ENCODE measurements at regions of chr6 and their contacts with region 1.

Region 1: GRCh38 chr6:149194820-149195558 is 122.5 kb upstream of the TAB2 start:
- DNase-seq: no peak
- ATAC-seq: no peak
- H3K4me3 ChIP-seq: no peak overlapping the region
- H3K4me3 Mint-ChIP-seq: no peak overlapping the region
- H3K27ac ChIP-seq: no peak overlapping the region
- H3K27ac Mint-ChIP-seq: no peak overlapping the region
- H3K4me1 ChIP-seq: peaks cover 5% of the 10 kb centered on the region
- H3K4me1 Mint-ChIP-seq: peaks cover 18% of the 10 kb centered on the region
- H3K27me3 ChIP-seq: no peaks in the 10 kb centered on the region
- H3K27me3 Mint-ChIP-seq: no peaks in the 10 kb centered on the region
- CTCF ChIP-seq: no peak

Region 2: DNA sequence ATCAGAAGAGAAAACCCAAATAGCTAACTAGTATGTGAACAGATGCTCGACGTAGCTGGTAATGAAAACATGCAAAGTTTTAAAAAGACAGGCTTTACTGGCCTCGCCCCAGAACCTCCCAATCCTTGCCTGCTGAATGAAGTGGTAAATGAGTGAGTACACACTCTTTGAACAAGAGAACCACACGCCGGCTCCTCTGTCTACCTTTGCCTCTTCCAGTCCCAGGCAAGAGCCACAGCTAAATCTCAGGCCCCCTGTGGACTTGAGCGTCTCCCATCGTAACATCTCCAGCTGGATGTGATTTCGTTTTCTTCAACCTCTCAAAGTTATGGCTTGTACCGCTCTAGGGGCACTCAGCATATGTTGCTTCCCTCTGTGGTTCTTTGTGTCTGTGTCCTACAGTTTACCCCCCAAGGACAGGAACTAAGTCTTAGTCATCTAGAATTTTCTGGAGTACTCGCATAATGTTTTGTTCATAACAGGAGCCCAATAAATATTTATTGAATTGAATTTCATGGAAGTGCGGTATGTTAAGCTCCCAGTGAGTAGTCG is 30.7 kb before region 1 on chr6:
- CTCF ChIA-PET with region 1: no interaction called
- POLR2A ChIA-PET with region 1: no interaction called
- intact Hi-C with region 1: no loop called
- DNase-seq: no peak
- ATAC-seq: no peak
- H3K4me3 ChIP-seq: no peak overlapping the region
- H3K4me3 Mint-ChIP-seq: no peak overlapping the region
- H3K27ac ChIP-seq: no peak overlapping the region
- H3K27ac Mint-ChIP-seq: no peak overlapping the region
- H3K4me1 ChIP-seq: peaks cover 30% of the 10 kb centered on the region
- H3K4me1 Mint-ChIP-seq: peaks cover 32% of the 10 kb centered on the region
- H3K27me3 ChIP-seq: no peaks in the 10 kb centered on the region
- H3K27me3 Mint-ChIP-seq: no peaks in the 10 kb centered on the region
- CTCF ChIP-seq: no peak

Region 3: GRCh38 chr6:149211046-149211571 is 16.1 kb after region 1 on chr6:
- CTCF ChIA-PET with region 1: no interaction called
- POLR2A ChIA-PET with region 1: interaction called, 3 read pairs
- intact Hi-C with region 1: loop called in 1 of 2 experiments (anchors 2 kb)
- DNase-seq: peak in 4 of 9 experiments; percentile 13 to 45 (median 26)
- ATAC-seq: peak; percentile 66
- H3K4me3 ChIP-seq: no peak overlapping the region
- H3K4me3 Mint-ChIP-seq: peak overlapping the region; percentile 19
- H3K27ac ChIP-seq: no peak overlapping the region
- H3K27ac Mint-ChIP-seq: peak overlapping the region; percentile 71
- H3K4me1 ChIP-seq: peaks cover 38% of the 10 kb centered on the region
- H3K4me1 Mint-ChIP-seq: peaks cover 21% of the 10 kb centered on the region
- H3K27me3 ChIP-seq: no peaks in the 10 kb centered on the region
- H3K27me3 Mint-ChIP-seq: no peaks in the 10 kb centered on the region
- CTCF ChIP-seq: no peak